Activated naive CD4-positive, alpha-beta T cell treated with anti-CD3 and anti-CD28 coated beads for 36 hours (primary cell): ENCODE measurements at regions of chr7 and their contacts with region 1.

Region 1: GRCh38 chr7:29035044-29035740 is 77.1 kb upstream of the TRIL start:
- DNase-seq: peak; percentile 33
- H3K4me3 Mint-ChIP-seq: no peak overlapping the region
- H3K27ac Mint-ChIP-seq: no peak overlapping the region
- H3K4me1 Mint-ChIP-seq: peaks cover 9% of the 10 kb centered on the region
- H3K27me3 Mint-ChIP-seq: no peaks in the 10 kb centered on the region

Region 2: DNA sequence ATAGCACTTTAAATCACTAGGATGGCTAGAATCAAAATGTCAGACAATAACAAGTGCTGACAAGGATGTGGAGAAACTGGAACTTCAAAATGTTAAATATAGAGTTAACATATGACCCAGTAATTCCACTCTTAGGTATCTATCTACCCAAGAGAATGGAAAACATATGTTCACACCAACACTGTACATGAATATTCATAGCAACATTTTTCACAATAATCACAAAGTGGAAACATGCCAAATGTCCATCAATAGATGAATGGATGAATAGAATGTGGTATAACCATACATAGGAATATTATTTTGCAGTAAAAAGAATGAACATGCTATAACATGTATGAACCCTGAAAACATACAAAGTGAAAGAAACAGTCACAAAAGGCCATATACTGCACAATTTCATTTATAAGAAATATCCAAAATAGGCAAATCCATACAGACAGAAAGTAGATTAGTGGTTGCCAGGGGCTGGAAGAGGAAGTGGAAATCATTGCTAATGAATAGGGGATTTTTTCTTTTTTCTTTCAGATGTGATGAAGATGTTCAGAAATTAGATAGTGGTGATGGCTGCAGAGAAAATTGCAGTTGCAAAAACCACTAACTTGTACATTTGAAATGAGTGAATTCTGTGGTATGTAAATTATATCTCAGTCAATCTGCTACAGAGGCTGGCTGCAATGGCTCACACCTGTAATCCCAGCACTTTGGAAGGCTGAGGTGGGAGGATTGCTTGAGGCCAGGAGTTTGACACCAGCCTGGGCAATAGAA is 18.1 kb after region 1 on chr7:
- CTCF ChIA-PET with region 1: no interaction called
- intact Hi-C with region 1: loop called (anchors 1 kb)
- DNase-seq: peak; percentile 12
- H3K4me3 Mint-ChIP-seq: no peak overlapping the region
- H3K27ac Mint-ChIP-seq: no peak overlapping the region
- H3K4me1 Mint-ChIP-seq: peaks cover 2% of the 10 kb centered on the region
- H3K27me3 Mint-ChIP-seq: peaks cover 3% of the 10 kb centered on the region